ENCODE measurements at regions of chr10 and their contacts with region 1.

Region 1: GRCh38 chr10:74955796-74956195 is 129.4 kb downstream of the KAT6B start:
- DNase-seq: no peak
- ATAC-seq: no peak
- H3K4me3 ChIP-seq: no peak overlapping the region
- H3K4me3 Mint-ChIP-seq: no peak overlapping the region
- H3K27ac ChIP-seq: no peak overlapping the region
- H3K27ac Mint-ChIP-seq: no peak overlapping the region
- H3K4me1 ChIP-seq: no peaks in the 10 kb centered on the region
- H3K4me1 Mint-ChIP-seq: peaks cover 26% of the 10 kb centered on the region
- H3K27me3 ChIP-seq: no peaks in the 10 kb centered on the region
- H3K27me3 Mint-ChIP-seq: no peaks in the 10 kb centered on the region
- CTCF ChIP-seq: no peak

Region 2: DNA sequence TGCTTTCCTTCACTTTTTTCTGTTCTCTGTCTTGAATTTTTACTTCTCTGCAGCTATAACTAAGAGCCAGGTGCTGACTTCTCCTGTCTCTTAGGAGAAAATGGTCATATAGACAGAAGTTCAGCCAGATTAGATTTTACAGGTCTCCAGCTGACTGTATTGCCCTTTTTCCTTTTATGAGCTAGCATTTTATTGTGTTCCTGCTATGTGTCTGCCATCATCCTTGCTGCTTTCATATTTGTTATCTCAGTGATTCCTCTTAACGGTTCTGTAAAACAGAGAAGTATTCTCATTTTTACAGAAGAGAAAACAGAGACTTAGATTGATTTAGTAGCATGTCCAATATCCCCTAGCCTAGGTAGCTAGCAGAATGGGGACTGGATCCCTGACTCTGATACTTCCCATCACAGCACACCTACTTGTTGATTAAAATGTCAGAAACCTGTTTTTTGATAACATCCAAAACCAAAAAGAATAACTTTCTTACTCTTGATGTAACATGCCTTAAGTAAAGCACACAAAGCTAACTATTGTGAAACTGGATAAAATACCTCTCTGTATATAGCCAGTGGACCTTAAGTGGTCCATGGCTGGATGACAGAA is 124.2 kb before region 1 on chr10:
- CTCF ChIA-PET with region 1: no interaction called
- POLR2A ChIA-PET with region 1: no interaction called
- intact Hi-C with region 1: loop called in 1 of 2 experiments (anchors 5 kb)
- DNase-seq: no peak
- ATAC-seq: no peak
- H3K4me3 ChIP-seq: no peak overlapping the region
- H3K4me3 Mint-ChIP-seq: no peak overlapping the region
- H3K27ac ChIP-seq: no peak overlapping the region
- H3K27ac Mint-ChIP-seq: peak overlapping the region; percentile 42
- H3K4me1 ChIP-seq: peaks cover 23% of the 10 kb centered on the region
- H3K4me1 Mint-ChIP-seq: peaks cover 69% of the 10 kb centered on the region
- H3K27me3 ChIP-seq: no peaks in the 10 kb centered on the region
- H3K27me3 Mint-ChIP-seq: no peaks in the 10 kb centered on the region
- CTCF ChIP-seq: no peak